B cell (primary cell): ENCODE measurements at regions of chr2 and their contacts with region 1.

Region 1: GRCh38 chr2:158903711-158904443 is 64.6 kb upstream of the TANC1 start:
- DNase-seq: no peak
- ATAC-seq: no peak
- H3K4me3 ChIP-seq: no peak overlapping the region
- H3K4me3 Mint-ChIP-seq: no peak overlapping the region
- H3K27ac ChIP-seq: no peak overlapping the region
- H3K27ac Mint-ChIP-seq: no peak overlapping the region
- H3K4me1 ChIP-seq: no peaks in the 10 kb centered on the region
- H3K4me1 Mint-ChIP-seq: no peaks in the 10 kb centered on the region
- H3K27me3 ChIP-seq: no peaks in the 10 kb centered on the region
- H3K27me3 Mint-ChIP-seq: peaks cover 3% of the 10 kb centered on the region
- CTCF ChIP-seq: no peak

Region 2: DNA sequence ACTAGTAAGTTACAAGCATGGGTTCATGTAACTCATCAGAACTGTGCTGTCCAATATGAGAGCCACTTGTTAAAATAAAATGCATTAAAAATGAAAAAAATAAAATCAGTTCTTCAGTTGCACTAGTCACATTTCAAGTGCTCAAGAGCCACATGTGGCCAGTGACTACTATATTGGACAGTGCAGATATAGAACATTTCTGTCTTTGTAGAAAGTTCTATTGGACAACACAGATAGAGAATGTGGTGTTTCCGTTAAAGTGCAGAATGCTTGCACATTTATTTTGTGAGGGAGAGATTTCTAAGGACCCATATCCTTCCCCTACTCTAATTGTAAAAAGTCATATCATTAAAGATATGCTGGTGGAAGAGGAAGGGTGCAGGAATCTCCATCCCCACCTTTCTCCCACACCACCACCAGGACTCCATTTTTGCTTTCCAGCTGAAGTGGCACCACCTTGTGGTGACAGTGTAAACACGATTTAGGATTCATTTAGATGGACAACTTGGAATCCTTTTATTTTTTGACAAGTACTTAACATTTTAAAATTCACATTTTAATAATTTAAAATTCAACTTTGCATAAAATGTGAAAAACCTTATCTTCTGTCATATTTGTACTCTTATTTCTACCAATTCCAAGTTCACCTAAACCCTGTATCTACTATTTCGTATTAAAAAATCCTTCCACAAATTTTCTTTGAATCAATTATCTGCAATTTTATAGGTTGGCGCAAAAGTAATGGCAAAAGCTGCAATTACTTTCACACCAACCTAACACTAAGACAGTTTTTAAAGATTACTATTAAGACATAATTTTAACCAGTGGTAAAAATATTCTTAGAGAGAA is 903.5 kb after region 1 on chr2:
- CTCF ChIA-PET with region 1: interaction called, 15 read pairs
- POLR2A ChIA-PET with region 1: no interaction called
- intact Hi-C with region 1: no loop called
- DNase-seq: peak; percentile 31
- ATAC-seq: no peak
- H3K4me3 ChIP-seq: no peak overlapping the region
- H3K4me3 Mint-ChIP-seq: no peak overlapping the region
- H3K27ac ChIP-seq: no peak overlapping the region
- H3K27ac Mint-ChIP-seq: no peak overlapping the region
- H3K4me1 ChIP-seq: peaks cover 0 to 5% of the 10 kb centered on the region in 2 donors
- H3K4me1 Mint-ChIP-seq: peaks cover 3% of the 10 kb centered on the region
- H3K27me3 ChIP-seq: no peaks in the 10 kb centered on the region
- H3K27me3 Mint-ChIP-seq: no peaks in the 10 kb centered on the region
- CTCF ChIP-seq: peak; percentile 70

Region 3: DNA sequence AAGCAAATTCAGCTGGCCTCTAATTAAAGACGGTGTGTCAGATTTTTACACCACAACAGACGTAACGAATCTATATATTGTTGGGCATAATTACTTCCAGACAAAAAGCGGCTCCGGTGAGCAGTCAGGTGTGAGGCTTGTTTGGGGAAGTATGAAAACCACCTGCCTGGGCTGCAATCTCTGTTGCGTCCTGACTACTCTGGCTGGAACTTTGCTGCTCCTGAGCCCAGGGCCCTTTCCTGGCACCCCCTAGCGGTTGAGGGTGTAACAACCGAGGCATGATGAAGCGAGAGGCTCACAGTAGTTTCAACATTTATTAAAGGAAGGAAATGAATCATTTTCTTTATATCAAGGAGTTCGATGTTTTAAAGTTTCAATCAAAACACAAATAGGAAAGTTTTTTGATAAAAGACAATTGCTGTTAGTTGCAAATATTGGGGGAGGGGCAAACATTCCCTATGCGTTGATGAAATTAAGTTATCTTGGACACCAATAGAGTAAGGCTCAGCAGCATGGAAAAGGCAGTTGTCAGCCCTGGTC is 1306.8 kb after region 1 on chr2:
- CTCF ChIA-PET with region 1: no interaction called
- POLR2A ChIA-PET with region 1: no interaction called
- intact Hi-C with region 1: loop called (anchors 1 kb)
- DNase-seq: peak; percentile 81
- ATAC-seq: peak; percentile 98
- H3K4me3 ChIP-seq: no peak overlapping the region
- H3K4me3 Mint-ChIP-seq: no peak overlapping the region
- H3K27ac ChIP-seq: no peak overlapping the region
- H3K27ac Mint-ChIP-seq: no peak overlapping the region
- H3K4me1 ChIP-seq: peaks cover 3 to 8% of the 10 kb centered on the region in 2 donors
- H3K4me1 Mint-ChIP-seq: peaks cover 21% of the 10 kb centered on the region
- H3K27me3 ChIP-seq: no peaks in the 10 kb centered on the region
- H3K27me3 Mint-ChIP-seq: peaks cover 17% of the 10 kb centered on the region
- CTCF ChIP-seq: peak; percentile 96

Region 4: DNA sequence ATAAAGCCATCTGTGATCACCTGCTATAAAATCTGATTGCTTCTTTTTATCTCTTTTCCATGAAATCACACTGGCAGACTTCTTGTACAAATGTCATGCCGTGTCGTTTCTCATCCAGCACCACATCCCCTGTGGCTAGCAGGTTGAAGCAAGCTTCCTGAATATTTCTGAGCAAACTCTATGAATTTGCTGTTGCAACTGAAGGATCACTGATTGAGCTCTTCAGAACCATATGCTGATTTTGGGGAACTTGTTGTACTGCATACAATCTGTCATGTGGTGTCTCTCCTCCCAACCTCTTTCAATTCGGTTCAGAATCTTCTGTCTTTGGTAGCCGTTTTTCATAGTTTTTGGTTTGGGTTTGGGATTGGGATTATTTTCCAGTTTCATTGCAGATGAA is 1647.4 kb after region 1 on chr2:
- CTCF ChIA-PET with region 1: no interaction called
- POLR2A ChIA-PET with region 1: no interaction called
- intact Hi-C with region 1: no loop called
- DNase-seq: no peak
- ATAC-seq: no peak
- H3K4me3 ChIP-seq: no peak overlapping the region
- H3K4me3 Mint-ChIP-seq: no peak overlapping the region
- H3K27ac ChIP-seq: no peak overlapping the region
- H3K27ac Mint-ChIP-seq: no peak overlapping the region
- H3K4me1 ChIP-seq: no peaks in the 10 kb centered on the region
- H3K4me1 Mint-ChIP-seq: no peaks in the 10 kb centered on the region
- H3K27me3 ChIP-seq: peaks cover 0 to 13% (median 2%) of the 10 kb centered on the region in 4 experiments
- H3K27me3 Mint-ChIP-seq: peaks cover 20% of the 10 kb centered on the region
- CTCF ChIP-seq: no peak